ENCODE measurements at regions of chr6 and their contacts with region 1.

Region 1: GRCh38 chr6:85537055-85537494 is 56.6 kb downstream of the SNX14 start:
- DNase-seq: peak in 1 of 35 experiments; percentile 16
- ATAC-seq: no peak
- H3K4me3 ChIP-seq: no peak overlapping the region
- H3K4me3 Mint-ChIP-seq: no peak overlapping the region
- H3K27ac ChIP-seq: no peak overlapping the region
- H3K27ac Mint-ChIP-seq: peak overlapping the region in 1 of 2 donors; percentile 52
- H3K4me1 ChIP-seq: no peaks in the 10 kb centered on the region
- H3K4me1 Mint-ChIP-seq: peaks cover 0 to 2% (median 2%) of the 10 kb centered on the region in 3 donors
- H3K27me3 ChIP-seq: no peaks in the 10 kb centered on the region
- H3K27me3 Mint-ChIP-seq: no peaks in the 10 kb centered on the region

Region 2: DNA sequence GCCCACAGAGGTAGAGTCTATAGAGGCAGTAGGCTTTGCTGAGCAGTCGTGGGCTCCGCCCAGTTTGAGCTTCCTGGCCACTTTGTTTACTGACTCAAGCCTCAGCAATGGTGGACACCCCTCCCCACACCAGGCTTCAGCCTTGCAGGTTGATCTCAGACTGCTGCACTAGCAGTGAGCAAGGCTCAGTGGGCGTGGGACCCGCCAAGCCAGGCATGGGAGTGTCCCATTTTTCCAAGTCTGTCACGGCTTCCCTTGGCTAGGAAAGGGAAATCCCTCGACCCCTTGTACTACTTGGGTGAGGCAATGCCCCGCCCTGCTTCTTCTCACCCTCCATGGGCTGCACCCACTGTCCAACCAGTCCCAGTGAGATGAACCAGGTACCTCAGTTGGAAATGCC is 222.5 kb before region 1 on chr6:
- CTCF ChIA-PET with region 1: no interaction called
- POLR2A ChIA-PET with region 1: no interaction called
- DNase-seq: no peak
- ATAC-seq: no peak
- H3K4me3 ChIP-seq: no peak overlapping the region
- H3K4me3 Mint-ChIP-seq: no peak overlapping the region
- H3K27ac ChIP-seq: no peak overlapping the region
- H3K27ac Mint-ChIP-seq: no peak overlapping the region
- H3K4me1 ChIP-seq: no peaks in the 10 kb centered on the region
- H3K4me1 Mint-ChIP-seq: no peaks in the 10 kb centered on the region
- H3K27me3 ChIP-seq: no peaks in the 10 kb centered on the region
- H3K27me3 Mint-ChIP-seq: peaks cover 2 to 3% of the 10 kb centered on the region in 2 donors

Region 3: GRCh38 chr6:85404502-85405174 is 132.4 kb before region 1 on chr6:
- CTCF ChIA-PET with region 1: no interaction called
- POLR2A ChIA-PET with region 1: no interaction called
- DNase-seq: no peak
- ATAC-seq: peak in 1 of 4 experiments; percentile 27
- H3K4me3 ChIP-seq: no peak overlapping the region
- H3K4me3 Mint-ChIP-seq: peak overlapping the region in 1 of 3 donors; percentile 13
- H3K27ac ChIP-seq: no peak overlapping the region
- H3K27ac Mint-ChIP-seq: peak overlapping the region; percentile 40 to 85
- H3K4me1 ChIP-seq: peaks cover 0 to 13% of the 10 kb centered on the region in 2 experiments
- H3K4me1 Mint-ChIP-seq: peaks cover 26 to 57% (median 31%) of the 10 kb centered on the region in 3 donors
- H3K27me3 ChIP-seq: no peaks in the 10 kb centered on the region
- H3K27me3 Mint-ChIP-seq: peaks cover 0 to 1% of the 10 kb centered on the region in 2 donors

Region 4: DNA sequence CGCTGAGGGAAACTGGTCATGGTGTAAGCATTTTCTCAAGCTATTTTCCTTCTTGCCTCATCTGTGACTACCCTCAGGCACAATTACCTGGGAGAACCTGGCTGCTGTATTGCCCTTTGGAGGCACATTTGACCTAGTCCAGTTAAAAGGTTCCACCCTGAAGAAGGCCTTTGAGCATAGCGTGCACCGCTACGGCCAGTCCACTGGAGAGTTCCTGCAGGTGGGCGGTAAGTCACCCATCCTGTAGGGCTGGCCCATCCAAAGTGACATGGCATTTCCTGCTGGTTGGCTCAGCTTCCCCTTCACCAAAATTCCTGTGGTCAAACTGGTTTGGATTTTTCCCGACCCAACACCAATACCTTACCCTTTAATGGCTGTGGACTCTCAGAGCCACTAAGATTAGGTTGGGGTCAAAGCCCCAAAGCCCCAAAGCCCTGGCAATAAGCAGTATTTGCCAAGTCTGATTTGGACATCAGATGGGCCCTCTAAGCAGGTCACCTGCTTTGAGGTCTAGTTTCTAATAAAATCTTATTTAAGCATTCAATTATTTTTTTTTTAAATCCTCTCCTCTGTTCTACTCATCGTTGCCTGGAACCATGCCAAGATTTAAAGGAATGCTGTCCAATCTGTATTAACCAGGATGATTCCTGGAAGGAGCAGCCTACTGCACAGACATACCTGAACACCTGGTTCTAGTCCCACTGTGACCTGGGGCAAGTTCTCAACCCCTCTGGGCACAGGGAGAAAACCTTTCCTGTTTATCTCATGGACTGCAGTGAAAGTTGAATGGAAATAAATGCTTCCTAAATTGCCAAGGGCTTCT is 46.4 kb before region 1 on chr6:
- CTCF ChIA-PET with region 1: no interaction called
- POLR2A ChIA-PET with region 1: no interaction called
- DNase-seq: no peak
- ATAC-seq: no peak
- H3K4me3 ChIP-seq: no peak overlapping the region
- H3K4me3 Mint-ChIP-seq: no peak overlapping the region
- H3K27ac ChIP-seq: no peak overlapping the region
- H3K27ac Mint-ChIP-seq: no peak overlapping the region
- H3K4me1 ChIP-seq: no peaks in the 10 kb centered on the region
- H3K4me1 Mint-ChIP-seq: no peaks in the 10 kb centered on the region
- H3K27me3 ChIP-seq: no peaks in the 10 kb centered on the region
- H3K27me3 Mint-ChIP-seq: no peaks in the 10 kb centered on the region

Region 5: DNA sequence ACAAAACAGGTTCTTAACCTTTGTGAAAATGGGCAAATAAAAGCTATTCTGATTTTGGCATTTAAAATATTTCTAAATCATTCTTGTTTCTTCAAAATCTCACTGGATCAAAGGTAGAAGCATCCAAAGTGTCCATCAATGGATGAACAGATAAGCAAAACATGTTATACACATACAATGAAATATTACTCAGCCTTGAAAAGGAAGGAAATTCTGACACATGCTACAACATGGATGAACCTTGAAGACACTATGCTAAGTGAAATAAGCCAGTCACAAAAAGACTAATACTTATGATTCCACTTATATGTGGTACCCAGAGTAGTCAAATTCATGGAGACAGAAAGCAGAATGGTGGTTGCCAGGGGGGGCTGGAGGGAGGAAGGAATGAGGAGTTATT is 10.6 kb after region 1 on chr6:
- CTCF ChIA-PET with region 1: interaction called in 1 of 2 experiments, 11 read pairs
- POLR2A ChIA-PET with region 1: no interaction called
- DNase-seq: no peak
- ATAC-seq: no peak
- H3K4me3 ChIP-seq: no peak overlapping the region
- H3K4me3 Mint-ChIP-seq: no peak overlapping the region
- H3K27ac ChIP-seq: no peak overlapping the region
- H3K27ac Mint-ChIP-seq: no peak overlapping the region
- H3K4me1 ChIP-seq: no peaks in the 10 kb centered on the region
- H3K4me1 Mint-ChIP-seq: no peaks in the 10 kb centered on the region
- H3K27me3 ChIP-seq: no peaks in the 10 kb centered on the region
- H3K27me3 Mint-ChIP-seq: no peaks in the 10 kb centered on the region

Measured in T-cell (primary cell).